ENCODE measurements at regions of chr4 and their contacts with region 1.

Region 1: DNA sequence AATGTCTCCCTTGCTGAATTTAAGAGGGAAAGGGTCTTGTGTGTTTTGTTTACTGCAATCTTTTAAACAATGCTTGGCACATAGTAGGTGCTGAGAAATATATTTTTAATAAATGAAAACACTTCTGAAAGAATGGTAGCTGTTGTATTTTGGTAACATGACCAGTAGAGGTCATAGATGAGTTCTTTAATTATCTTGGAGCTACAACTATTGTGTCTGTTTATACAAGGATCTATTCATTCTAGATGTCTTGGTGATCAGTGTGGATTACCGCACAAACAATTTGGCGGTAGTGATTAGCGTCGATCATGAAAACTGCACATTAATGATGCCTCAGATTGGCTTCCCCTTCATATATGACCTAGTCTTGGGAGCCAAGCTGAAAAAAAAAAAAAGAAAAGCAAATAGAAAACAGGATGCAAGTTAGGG is 21.4 kb upstream of the SCRG1 start:
- DNase-seq: peak in 1 of 35 experiments; percentile 43
- ATAC-seq: peak in 3 of 4 experiments; percentile 34 to 47 (median 44)
- H3K4me3 ChIP-seq: no peak overlapping the region
- H3K4me3 Mint-ChIP-seq: no peak overlapping the region
- H3K27ac ChIP-seq: no peak overlapping the region
- H3K27ac Mint-ChIP-seq: no peak overlapping the region
- H3K4me1 ChIP-seq: peaks cover 2 to 6% of the 10 kb centered on the region in 2 experiments
- H3K4me1 Mint-ChIP-seq: peaks cover 7 to 13% (median 9%) of the 10 kb centered on the region in 3 donors
- H3K27me3 ChIP-seq: no peaks in the 10 kb centered on the region
- H3K27me3 Mint-ChIP-seq: no peaks in the 10 kb centered on the region

Region 2: GRCh38 chr4:172619218-172619617 is 801.1 kb before region 1 on chr4:
- CTCF ChIA-PET with region 1: no interaction called
- POLR2A ChIA-PET with region 1: no interaction called
- DNase-seq: no peak
- ATAC-seq: no peak
- H3K4me3 ChIP-seq: no peak overlapping the region
- H3K4me3 Mint-ChIP-seq: no peak overlapping the region
- H3K27ac ChIP-seq: no peak overlapping the region
- H3K27ac Mint-ChIP-seq: no peak overlapping the region
- H3K4me1 ChIP-seq: no peaks in the 10 kb centered on the region
- H3K4me1 Mint-ChIP-seq: no peaks in the 10 kb centered on the region
- H3K27me3 ChIP-seq: no peaks in the 10 kb centered on the region
- H3K27me3 Mint-ChIP-seq: no peaks in the 10 kb centered on the region

Region 3: GRCh38 chr4:173289353-173289727 is 131.0 kb before region 1 on chr4:
- CTCF ChIA-PET with region 1: interaction called, 3 to 10 read pairs
- POLR2A ChIA-PET with region 1: no interaction called
- DNase-seq: no peak
- ATAC-seq: peak in 1 of 4 experiments; percentile 16
- H3K4me3 ChIP-seq: peak overlapping the region in 1 of 2 donors; percentile 1
- H3K4me3 Mint-ChIP-seq: peak overlapping the region; percentile 60 to 75 (median 62)
- H3K27ac ChIP-seq: no peak overlapping the region
- H3K27ac Mint-ChIP-seq: peak overlapping the region in 1 of 2 donors; percentile 37
- H3K4me1 ChIP-seq: peaks cover 0 to 3% of the 10 kb centered on the region in 2 experiments
- H3K4me1 Mint-ChIP-seq: peaks cover 15 to 18% (median 17%) of the 10 kb centered on the region in 3 donors
- H3K27me3 ChIP-seq: no peaks in the 10 kb centered on the region
- H3K27me3 Mint-ChIP-seq: no peaks in the 10 kb centered on the region

Region 4: DNA sequence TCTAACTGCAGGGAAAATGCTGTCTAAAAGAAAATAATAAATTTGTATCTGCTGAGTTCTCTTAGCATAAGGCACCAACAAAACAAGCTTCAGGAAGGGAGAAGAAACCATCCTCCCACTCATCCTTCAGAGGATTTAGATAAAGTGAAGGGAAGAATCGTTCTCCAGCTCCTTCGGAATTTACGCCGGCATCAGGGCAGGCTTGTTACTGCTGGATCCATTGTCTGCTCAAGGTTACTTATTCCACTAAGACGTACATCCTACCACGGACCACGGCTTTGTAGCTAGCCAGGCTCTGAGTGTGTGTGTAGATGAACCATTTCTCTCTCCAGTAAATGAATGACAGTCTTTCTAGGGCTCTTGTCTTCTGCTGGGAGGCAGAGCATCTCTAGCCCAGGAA is 49.3 kb after region 1 on chr4:
- CTCF ChIA-PET with region 1: no interaction called
- POLR2A ChIA-PET with region 1: no interaction called
- DNase-seq: no peak
- ATAC-seq: no peak
- H3K4me3 ChIP-seq: no peak overlapping the region
- H3K4me3 Mint-ChIP-seq: no peak overlapping the region
- H3K27ac ChIP-seq: no peak overlapping the region
- H3K27ac Mint-ChIP-seq: no peak overlapping the region
- H3K4me1 ChIP-seq: no peaks in the 10 kb centered on the region
- H3K4me1 Mint-ChIP-seq: no peaks in the 10 kb centered on the region
- H3K27me3 ChIP-seq: no peaks in the 10 kb centered on the region
- H3K27me3 Mint-ChIP-seq: peaks cover 7 to 9% of the 10 kb centered on the region in 2 donors

Region 5: GRCh38 chr4:173494013-173494970 is 74.0 kb after region 1 on chr4:
- CTCF ChIA-PET with region 1: interaction called, 12 to 28 read pairs
- POLR2A ChIA-PET with region 1: no interaction called
- DNase-seq: peak in 33 of 35 experiments; percentile 22 to 81 (median 44)
- ATAC-seq: peak; percentile 92 to 100 (median 95)
- H3K4me3 ChIP-seq: peak overlapping the region; percentile 35 to 48
- H3K4me3 Mint-ChIP-seq: peak overlapping the region; percentile 71 to 78 (median 75)
- H3K27ac ChIP-seq: no peak overlapping the region
- H3K27ac Mint-ChIP-seq: peak overlapping the region in 1 of 2 donors; percentile 12
- H3K4me1 ChIP-seq: peaks cover 0 to 13% of the 10 kb centered on the region in 2 experiments
- H3K4me1 Mint-ChIP-seq: peaks cover 10 to 17% (median 14%) of the 10 kb centered on the region in 3 donors
- H3K27me3 ChIP-seq: peaks cover 0 to 8% of the 10 kb centered on the region in 2 experiments
- H3K27me3 Mint-ChIP-seq: peaks cover 34 to 37% of the 10 kb centered on the region in 2 donors

Measured in T-cell (primary cell).